Calu3 (cell line): ENCODE measurements at regions of chr10 and their contacts with region 1.

Region 1: GRCh38 chr10:73413528-73414229 is at the start of gene ANXA7:
- DNase-seq: peak; percentile 97
- H3K4me3 Mint-ChIP-seq: peak within 1 kb of the TSS; percentile 95
- H3K27ac Mint-ChIP-seq: peak within 1 kb of the TSS; percentile 92
- H3K4me1 Mint-ChIP-seq: peaks cover 32% of the 10 kb centered on the region
- H3K27me3 Mint-ChIP-seq: no peaks in the 10 kb centered on the region
- CTCF ChIP-seq: no peak
- total RNA-seq, gene ANXA7: 160 and 167 TPM in 2 replicates

Region 2: DNA sequence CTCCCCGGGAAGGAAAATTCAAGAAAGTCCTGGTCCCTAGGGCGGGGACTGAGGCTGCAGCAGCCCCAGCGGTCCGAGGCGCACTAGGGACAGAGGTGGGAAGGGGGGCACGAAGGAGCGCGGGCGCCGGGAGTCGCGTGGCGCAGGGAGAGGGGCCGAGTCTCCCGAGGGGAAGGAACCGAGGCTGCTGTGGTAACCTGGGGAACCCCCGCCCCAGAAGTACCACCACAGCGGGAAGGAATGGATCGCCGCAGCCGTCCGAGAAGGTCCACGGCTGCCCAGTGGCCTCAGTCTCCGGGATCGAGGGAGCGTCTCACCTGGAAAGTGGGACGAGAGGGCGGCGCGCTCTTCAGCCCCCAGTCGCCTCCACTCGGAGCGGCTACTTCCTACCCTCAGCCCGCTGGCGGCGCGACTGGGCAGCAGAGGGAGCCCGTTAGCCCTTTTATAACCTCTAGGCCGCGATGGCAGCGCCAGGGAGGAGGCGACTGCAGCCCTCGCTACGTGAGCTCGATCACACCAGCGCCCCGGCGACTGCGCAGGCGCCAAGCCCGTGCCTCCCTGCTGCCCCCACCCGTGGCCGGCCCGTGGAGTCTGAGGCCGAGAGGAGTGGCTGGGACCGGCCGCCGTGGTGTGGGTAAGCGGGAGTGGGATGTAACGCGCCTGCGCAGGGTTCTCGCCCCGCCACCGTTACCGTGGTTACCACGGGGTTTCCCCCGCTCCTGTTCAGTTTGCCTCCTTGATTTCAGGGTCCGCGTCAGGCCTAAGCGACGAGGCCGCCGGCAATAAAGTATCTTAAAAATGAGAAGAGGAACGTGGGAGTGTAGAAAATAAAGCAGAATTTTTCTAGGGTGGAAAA is 317.0 kb before region 1 on chr10 and contains the start of gene P4HA1:
- CTCF ChIA-PET with region 1: no interaction called
- intact Hi-C with region 1: no loop called
- DNase-seq: peak; percentile 98
- H3K4me3 Mint-ChIP-seq: peak within 1 kb of the TSS; percentile 95
- H3K27ac Mint-ChIP-seq: peak within 1 kb of the TSS; percentile 96
- H3K4me1 Mint-ChIP-seq: no peaks in the 10 kb centered on the region
- H3K27me3 Mint-ChIP-seq: no peaks in the 10 kb centered on the region
- CTCF ChIP-seq: peak; percentile 80
- total RNA-seq, gene P4HA1: 20.3 and 20.9 TPM in 2 replicates

Region 3: DNA sequence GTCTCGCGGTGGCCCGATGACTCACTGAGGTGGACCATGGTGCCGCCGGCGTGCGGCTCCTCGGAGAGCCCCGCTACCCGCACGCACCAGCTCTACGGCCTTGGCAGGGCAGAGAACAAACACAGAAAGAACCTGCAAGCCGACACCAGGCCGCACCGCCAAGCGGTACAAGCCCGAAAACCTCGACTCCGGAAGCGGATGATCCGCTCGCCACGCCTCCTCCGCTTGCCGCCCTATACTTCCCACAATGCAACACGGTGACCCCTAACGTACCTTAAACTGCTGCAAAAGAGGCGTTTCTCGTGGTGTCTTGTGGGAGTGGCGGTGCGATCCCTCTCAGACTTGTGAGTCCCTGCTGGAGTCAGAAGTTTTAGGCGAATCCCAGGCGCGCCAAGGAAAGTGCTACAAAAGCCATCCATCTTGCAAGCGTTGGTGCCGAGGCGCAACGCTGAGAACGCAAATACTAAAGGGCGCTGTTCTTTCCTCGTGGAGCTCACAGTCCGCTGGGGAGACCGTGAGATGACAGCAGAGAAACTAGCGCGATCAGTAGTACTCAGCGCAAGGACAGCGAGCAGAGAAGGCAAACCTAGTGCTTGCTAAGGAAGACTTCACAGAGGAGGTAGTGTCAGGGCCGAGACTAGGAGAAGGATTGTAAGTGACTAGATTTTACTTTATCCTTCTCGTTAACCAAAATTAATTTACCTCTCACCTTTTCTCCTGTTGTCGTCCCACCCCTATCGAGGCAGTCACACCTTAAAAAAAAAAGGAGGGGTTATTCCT is 161.0 kb before region 1 on chr10 and contains the start of gene MRPS16:
- CTCF ChIA-PET with region 1: interaction called, 10 read pairs
- intact Hi-C with region 1: no loop called
- DNase-seq: peak; percentile 95
- H3K4me3 Mint-ChIP-seq: peak within 1 kb of the TSS; percentile 93
- H3K27ac Mint-ChIP-seq: peak within 1 kb of the TSS; percentile 95
- H3K4me1 Mint-ChIP-seq: peaks cover 28% of the 10 kb centered on the region
- H3K27me3 Mint-ChIP-seq: no peaks in the 10 kb centered on the region
- CTCF ChIP-seq: no peak
- total RNA-seq, gene MRPS16: 125 and 126 TPM in 2 replicates

Region 4: GRCh38 chr10:73263948-73264347 is 149.7 kb before region 1 on chr10:
- CTCF ChIA-PET with region 1: interaction called, 4 read pairs
- intact Hi-C with region 1: loop called (anchors 5 kb)
- DNase-seq: no peak
- H3K4me3 Mint-ChIP-seq: no peak overlapping the region
- H3K27ac Mint-ChIP-seq: peak overlapping the region; percentile 29
- H3K4me1 Mint-ChIP-seq: peaks cover 24% of the 10 kb centered on the region
- H3K27me3 Mint-ChIP-seq: no peaks in the 10 kb centered on the region
- CTCF ChIP-seq: no peak

Region 5: DNA sequence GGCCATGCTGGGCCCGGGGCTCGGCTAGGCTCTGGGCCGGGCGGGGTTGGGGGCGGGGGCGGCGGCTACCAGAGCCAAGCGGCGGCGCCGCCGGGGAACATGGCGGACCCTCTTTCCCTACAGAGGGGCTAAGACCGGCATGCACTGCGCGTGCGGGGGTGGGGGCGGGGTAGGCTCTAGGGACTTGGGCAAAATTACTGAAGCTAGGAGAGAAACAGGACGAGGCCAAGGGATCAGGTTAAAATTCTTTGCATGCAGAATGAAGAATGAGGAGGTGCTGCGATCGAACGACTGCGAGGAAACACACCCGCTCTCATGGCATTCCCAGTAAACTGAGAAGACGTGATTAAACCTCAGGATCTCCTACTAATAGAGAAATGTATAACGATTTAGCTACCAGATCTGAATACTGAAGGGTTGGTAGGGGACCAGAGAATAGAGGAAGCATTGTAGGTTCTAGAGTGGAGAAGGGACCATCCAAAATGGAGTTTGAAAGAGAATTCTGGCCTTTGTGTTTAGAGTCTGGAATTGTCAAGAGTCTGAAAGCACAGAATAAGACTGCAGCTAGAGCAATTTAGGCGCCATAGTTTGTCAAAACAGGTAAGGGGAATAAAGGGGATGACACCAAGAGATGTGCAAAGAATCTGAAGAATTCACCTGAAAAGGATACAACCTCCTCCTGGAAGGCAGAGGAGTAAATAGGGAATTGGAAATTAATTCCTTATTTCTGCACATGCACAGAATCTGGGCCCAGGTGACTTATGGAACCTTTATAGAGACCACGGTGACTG is 82.4 kb after region 1 on chr10 and contains the start of gene PPP3CB:
- CTCF ChIA-PET with region 1: no interaction called
- intact Hi-C with region 1: loop called (anchors 5 kb)
- DNase-seq: peak; percentile 87
- H3K4me3 Mint-ChIP-seq: peak within 1 kb of the TSS; percentile 86
- H3K27ac Mint-ChIP-seq: peak within 1 kb of the TSS; percentile 78
- H3K4me1 Mint-ChIP-seq: peaks cover 29% of the 10 kb centered on the region
- H3K27me3 Mint-ChIP-seq: no peaks in the 10 kb centered on the region
- CTCF ChIP-seq: no peak
- total RNA-seq, gene PPP3CB: 26.4 and 27.5 TPM in 2 replicates

Region 6: DNA sequence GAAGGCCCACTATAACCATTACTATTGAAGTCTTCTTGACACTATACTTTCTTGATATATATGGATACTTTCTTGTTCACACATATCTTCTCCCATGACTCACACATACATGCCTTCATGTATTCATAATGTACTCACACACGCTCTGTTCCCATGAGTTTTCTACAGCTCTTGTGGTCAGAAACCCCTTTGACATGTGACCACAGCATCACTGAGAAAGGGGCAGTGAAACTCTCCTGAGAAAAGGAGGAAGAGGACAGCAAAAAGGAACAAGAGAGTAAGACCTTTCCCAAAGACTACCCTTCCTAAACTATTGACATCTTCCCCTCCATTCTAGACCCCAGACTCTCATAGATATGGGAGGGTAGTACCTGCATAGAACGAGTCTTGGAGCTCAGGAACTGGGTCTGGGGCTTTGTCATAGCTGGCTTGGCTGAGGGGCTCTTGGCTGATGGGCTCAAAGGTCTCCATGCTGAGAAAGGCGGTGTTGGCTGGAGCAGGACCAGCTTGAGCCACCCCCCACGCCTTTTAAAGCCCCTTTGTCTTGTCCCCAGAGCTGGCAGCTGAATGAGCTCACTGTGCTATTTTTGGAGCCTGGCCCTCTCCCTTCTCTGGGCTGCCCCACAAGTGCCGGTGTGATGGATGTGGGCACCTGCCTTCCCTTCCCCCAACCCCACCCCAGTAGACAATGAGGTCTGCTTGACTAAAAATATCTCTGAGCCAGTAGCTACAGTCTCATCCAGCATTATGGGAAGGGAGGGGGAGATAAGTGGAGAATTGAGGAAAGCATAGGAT is 237.1 kb after region 1 on chr10:
- CTCF ChIA-PET with region 1: no interaction called
- intact Hi-C with region 1: loop called (anchors 10 kb)
- DNase-seq: no peak
- H3K4me3 Mint-ChIP-seq: no peak overlapping the region
- H3K27ac Mint-ChIP-seq: no peak overlapping the region
- H3K4me1 Mint-ChIP-seq: no peaks in the 10 kb centered on the region
- H3K27me3 Mint-ChIP-seq: peaks cover 70% of the 10 kb centered on the region
- CTCF ChIP-seq: no peak